Activated CD4-positive, alpha-beta T cell treated with anti-CD3 and anti-CD28 coated beads for 36 hours (primary cell): ENCODE measurements at regions of chr12 and their contacts with region 1.

Region 1: DNA sequence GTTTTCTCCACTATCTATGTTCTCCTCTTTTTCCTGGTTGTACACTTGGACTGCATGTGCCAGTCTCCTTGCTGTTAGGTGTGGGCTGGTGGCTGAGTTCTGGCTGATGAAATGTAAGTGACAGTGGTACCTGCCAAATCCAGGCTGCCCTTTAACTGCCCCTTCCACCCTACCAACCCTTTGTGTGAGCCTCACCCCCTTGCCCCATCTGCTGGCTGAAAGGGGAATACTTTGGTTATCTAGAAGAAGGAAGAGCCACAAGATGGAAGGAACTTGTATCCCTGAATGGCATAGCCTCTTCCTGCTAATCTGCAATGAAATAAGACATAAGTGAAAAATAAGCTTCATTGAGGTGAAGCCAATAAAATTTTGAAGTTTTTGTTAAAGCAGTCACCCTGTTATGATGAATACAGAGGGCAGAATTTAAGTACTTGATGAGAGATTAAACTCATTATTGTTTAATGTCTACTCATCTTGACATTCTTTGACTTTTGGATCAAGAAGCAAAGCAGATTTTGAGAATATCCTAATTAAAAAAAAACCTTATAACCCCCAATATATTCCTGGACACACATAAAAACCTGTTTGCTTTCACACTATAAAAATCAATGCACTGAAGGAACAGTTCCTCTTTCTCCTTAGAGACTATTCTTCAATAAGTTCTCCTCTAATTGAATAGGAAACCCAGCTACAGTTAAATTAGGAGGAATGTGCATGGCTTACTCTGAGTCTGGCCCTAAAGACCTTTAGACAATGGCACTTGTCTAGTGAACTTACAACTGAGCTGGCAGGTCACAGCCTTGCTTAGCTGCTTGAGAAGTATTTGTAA is 262.6 kb upstream of the BTG1 start:
- DNase-seq: peak; percentile 75
- ATAC-seq: peak; percentile 35
- H3K4me3 Mint-ChIP-seq: no peak overlapping the region
- H3K27ac Mint-ChIP-seq: peak overlapping the region; percentile 60
- H3K4me1 Mint-ChIP-seq: peaks cover 53% of the 10 kb centered on the region
- H3K27me3 Mint-ChIP-seq: no peaks in the 10 kb centered on the region

Region 2: GRCh38 chr12:92208613-92209121 is 199.6 kb before region 1 on chr12:
- CTCF ChIA-PET with region 1: no interaction called
- POLR2A ChIA-PET with region 1: no interaction called
- intact Hi-C with region 1: loop called in 1 of 2 experiments (anchors 2 kb)
- DNase-seq: peak; percentile 40
- ATAC-seq: peak; percentile 77
- H3K4me3 Mint-ChIP-seq: peak overlapping the region; percentile 67
- H3K27ac Mint-ChIP-seq: peak overlapping the region; percentile 81
- H3K4me1 Mint-ChIP-seq: peaks cover 32% of the 10 kb centered on the region
- H3K27me3 Mint-ChIP-seq: no peaks in the 10 kb centered on the region

Region 3: GRCh38 chr12:92363295-92364146 is 44.8 kb before region 1 on chr12:
- CTCF ChIA-PET with region 1: interaction called, 5 read pairs
- POLR2A ChIA-PET with region 1: no interaction called
- intact Hi-C with region 1: loop called in 1 of 2 experiments (anchors 1 kb)
- DNase-seq: peak; percentile 52
- ATAC-seq: peak; percentile 57
- H3K4me3 Mint-ChIP-seq: peak overlapping the region; percentile 62
- H3K27ac Mint-ChIP-seq: peak overlapping the region; percentile 81
- H3K4me1 Mint-ChIP-seq: peaks cover 62% of the 10 kb centered on the region
- H3K27me3 Mint-ChIP-seq: no peaks in the 10 kb centered on the region

Region 4: GRCh38 chr12:92424338-92424737 is 16.1 kb after region 1 on chr12:
- CTCF ChIA-PET with region 1: interaction called, 10 read pairs
- POLR2A ChIA-PET with region 1: no interaction called
- intact Hi-C with region 1: no loop called
- DNase-seq: no peak
- ATAC-seq: no peak
- H3K4me3 Mint-ChIP-seq: no peak overlapping the region
- H3K27ac Mint-ChIP-seq: no peak overlapping the region
- H3K4me1 Mint-ChIP-seq: peaks cover 50% of the 10 kb centered on the region
- H3K27me3 Mint-ChIP-seq: no peaks in the 10 kb centered on the region

Region 5: GRCh38 chr12:92551853-92552397 is 143.6 kb after region 1 on chr12:
- CTCF ChIA-PET with region 1: no interaction called
- POLR2A ChIA-PET with region 1: no interaction called
- intact Hi-C with region 1: loop called (anchors 5 kb)
- DNase-seq: peak; percentile 75
- ATAC-seq: peak; percentile 82
- H3K4me3 Mint-ChIP-seq: no peak overlapping the region
- H3K27ac Mint-ChIP-seq: no peak overlapping the region
- H3K4me1 Mint-ChIP-seq: peaks cover 16% of the 10 kb centered on the region
- H3K27me3 Mint-ChIP-seq: no peaks in the 10 kb centered on the region